Activated CD4-positive, alpha-beta memory T cell treated with anti-CD3 and anti-CD28 coated beads for 36 hours (primary cell): ENCODE measurements at regions of chr4 and their contacts with region 1.

Region 1: DNA sequence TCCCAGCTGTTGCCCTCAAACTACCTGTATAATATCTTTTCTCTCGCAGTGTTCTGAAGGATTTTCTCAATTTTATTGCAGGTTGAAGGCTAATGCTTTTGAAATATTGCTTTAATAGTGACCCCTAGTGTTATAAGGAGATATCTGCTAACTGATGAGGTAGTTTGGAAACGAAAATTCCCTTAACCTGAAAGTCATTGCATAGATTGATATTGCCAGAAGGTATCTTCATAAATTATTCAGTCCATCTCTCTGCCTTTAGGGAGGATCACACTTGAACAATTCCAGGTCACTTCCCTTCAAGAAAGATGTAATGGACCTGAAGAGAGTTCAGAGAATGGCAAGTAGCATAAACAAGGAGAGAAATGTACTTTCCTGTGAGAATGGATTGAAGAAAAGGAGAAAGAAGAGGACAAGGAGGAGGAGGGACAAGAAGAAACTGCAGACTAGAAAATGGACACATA is 44.1 kb downstream of the TIGD4 start:
- DNase-seq: no peak
- H3K4me3 Mint-ChIP-seq: no peak overlapping the region
- H3K27ac Mint-ChIP-seq: no peak overlapping the region
- H3K4me1 Mint-ChIP-seq: peaks cover 3% of the 10 kb centered on the region
- H3K27me3 Mint-ChIP-seq: peaks cover 3% of the 10 kb centered on the region

Region 2: DNA sequence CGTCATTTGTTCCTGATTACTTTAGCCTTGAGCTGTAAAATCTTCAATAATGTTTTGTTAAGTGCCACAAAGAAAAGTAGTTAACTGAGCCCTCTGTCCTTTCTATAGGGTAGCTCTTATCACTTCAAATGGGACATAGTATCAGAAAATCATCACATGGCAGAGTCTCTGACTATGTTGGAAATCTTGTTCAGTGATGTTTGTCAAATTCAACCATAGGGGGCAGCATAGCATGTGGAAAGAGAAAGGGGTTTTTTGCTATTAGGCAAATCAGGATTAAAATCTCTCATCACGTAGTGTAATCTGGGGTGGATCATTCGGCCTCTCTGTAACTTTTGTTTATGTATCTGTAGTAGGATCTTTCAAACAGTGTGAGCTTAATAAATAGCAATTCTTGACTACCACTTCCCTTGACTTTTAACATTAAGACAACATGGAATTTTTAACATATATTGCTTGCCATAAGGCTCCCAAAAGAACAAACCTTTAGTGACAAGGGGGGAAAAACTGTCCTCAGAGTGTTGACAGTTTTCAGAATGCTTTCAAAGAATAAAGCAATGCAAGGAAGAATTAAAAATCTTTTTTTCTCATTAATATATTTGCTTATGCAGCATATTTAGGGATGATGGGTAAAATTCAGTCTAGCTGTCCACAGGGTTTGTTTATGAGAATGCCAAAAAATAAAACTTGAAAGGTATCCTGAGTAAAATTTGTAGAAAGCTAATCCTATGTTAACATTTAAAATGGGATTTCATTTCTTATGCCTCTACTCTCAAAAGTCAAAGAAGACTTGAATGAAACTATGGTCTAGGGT is 326.7 kb before region 1 on chr4:
- CTCF ChIA-PET with region 1: interaction called, 16 read pairs
- POLR2A ChIA-PET with region 1: no interaction called
- intact Hi-C with region 1: loop called (anchors 1 kb)
- DNase-seq: no peak
- H3K4me3 Mint-ChIP-seq: no peak overlapping the region
- H3K27ac Mint-ChIP-seq: no peak overlapping the region
- H3K4me1 Mint-ChIP-seq: peaks cover 12% of the 10 kb centered on the region
- H3K27me3 Mint-ChIP-seq: no peaks in the 10 kb centered on the region

Region 3: DNA sequence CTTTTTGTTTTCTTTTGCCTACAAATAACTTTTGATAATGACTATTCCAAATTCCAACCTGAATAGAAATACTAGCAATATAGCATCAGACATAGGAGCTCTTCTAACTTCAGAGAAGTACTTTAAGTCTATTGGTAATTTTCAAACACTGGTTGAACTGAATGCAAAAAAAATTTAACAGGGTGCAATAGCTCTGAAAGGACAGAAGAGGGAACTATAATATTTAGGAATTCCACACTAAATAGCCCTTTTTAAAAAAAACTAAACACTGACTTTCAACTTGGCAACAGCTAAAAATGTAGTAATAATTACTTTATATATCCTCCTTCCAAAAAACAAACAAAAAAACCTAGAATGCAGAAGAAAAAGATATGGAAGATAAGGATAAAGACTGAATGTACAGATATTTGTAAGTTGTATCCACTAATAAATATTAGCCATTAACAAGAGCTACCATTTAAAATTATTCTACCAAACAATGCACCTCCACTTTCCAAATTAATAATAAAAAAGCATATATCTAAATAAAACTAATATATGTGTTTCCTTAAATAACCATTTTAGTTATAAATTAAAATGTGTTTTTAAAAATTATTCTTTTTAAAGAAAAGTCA is 280.9 kb before region 1 on chr4:
- CTCF ChIA-PET with region 1: interaction called, 11 read pairs
- POLR2A ChIA-PET with region 1: no interaction called
- intact Hi-C with region 1: loop called (anchors 5 kb)
- DNase-seq: no peak
- H3K4me3 Mint-ChIP-seq: no peak overlapping the region
- H3K27ac Mint-ChIP-seq: no peak overlapping the region
- H3K4me1 Mint-ChIP-seq: peaks cover 33% of the 10 kb centered on the region
- H3K27me3 Mint-ChIP-seq: no peaks in the 10 kb centered on the region